ENCODE measurements at regions of chr3 and their contacts with region 1.

Region 1: GRCh38 chr3:72938471-72939265 is 50.8 kb downstream of the GXYLT2 start:
- DNase-seq: peak; percentile 90
- H3K4me3 ChIP-seq: no peak overlapping the region
- H3K27me3 ChIP-seq: no peaks in the 10 kb centered on the region
- CTCF ChIP-seq: peak; percentile 67

Region 2: GRCh38 chr3:73086071-73086494 is 147.4 kb after region 1 on chr3:
- CTCF ChIA-PET with region 1: interaction called, 10 read pairs
- POLR2A ChIA-PET with region 1: no interaction called
- DNase-seq: no peak
- H3K4me3 ChIP-seq: no peak overlapping the region
- H3K27me3 ChIP-seq: no peaks in the 10 kb centered on the region
- CTCF ChIP-seq: peak; percentile 70

Measured in BJ (cell line).